Activated CD4-positive, alpha-beta memory T cell treated with anti-CD3 and anti-CD28 coated beads for 36 hours (primary cell): ENCODE measurements at regions of chr6 and their contacts with region 1.

Region 1: DNA sequence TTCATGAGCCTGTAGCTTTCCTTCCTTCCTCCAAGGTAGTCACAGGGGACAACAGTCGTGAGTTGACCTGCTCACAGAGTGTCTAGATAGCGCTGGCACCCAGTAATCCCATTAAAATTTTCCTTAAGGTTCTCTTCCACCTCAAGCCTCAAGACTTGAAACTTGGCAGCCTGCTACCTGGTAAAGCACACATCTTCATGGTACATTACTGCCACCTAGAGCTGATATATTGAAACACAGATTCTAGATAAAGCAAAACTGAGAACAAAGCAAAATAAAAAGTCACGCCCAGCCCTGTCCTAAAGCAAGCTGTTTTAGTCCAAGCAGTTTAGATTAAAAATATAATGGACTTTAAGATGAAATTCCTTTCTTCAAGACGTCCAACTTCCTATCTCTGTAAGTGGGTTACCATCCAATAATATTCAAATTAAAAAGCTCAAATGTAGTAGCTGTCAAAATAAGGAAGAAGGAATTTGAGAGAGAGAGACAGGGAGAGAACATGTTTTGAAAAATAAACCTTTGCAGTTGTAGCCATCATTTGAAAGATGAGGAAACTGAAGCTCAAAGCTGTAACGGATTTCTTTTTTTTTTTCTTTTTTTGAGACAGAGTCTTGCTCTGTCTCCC is 50.7 kb upstream of the CD83 start:
- DNase-seq: no peak
- H3K4me3 Mint-ChIP-seq: no peak overlapping the region
- H3K27ac Mint-ChIP-seq: no peak overlapping the region
- H3K4me1 Mint-ChIP-seq: peaks cover 13% of the 10 kb centered on the region
- H3K27me3 Mint-ChIP-seq: peaks cover 6% of the 10 kb centered on the region

Region 2: GRCh38 chr6:13795041-13795750 is 271.7 kb before region 1 on chr6:
- CTCF ChIA-PET with region 1: interaction called, 16 read pairs
- POLR2A ChIA-PET with region 1: no interaction called
- intact Hi-C with region 1: loop called (anchors 1 kb)
- DNase-seq: peak; percentile 93
- H3K4me3 Mint-ChIP-seq: no peak overlapping the region
- H3K27ac Mint-ChIP-seq: no peak overlapping the region
- H3K4me1 Mint-ChIP-seq: peaks cover 24% of the 10 kb centered on the region
- H3K27me3 Mint-ChIP-seq: no peaks in the 10 kb centered on the region

Region 3: DNA sequence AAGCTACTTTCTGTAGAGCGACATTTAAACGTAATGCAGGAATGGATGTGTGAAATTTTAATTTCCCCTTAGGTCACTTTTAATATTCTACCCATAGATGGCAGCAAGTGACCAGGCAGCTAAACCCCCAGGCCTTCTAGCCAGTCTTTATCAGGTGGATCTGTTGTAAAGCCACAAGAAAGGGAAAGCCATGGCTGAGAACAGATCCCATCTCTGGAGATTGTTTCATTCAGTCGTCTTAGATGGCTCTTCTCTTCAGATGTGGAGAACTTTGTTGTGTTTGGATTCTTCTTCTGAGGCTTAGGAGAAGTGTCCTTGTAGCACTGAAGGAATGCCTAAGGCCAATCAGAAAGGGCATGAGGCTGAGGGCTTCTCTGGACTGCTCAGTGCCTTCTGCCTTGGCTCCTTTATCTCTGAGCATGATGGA is 157.9 kb before region 1 on chr6:
- CTCF ChIA-PET with region 1: interaction called, 143 read pairs
- POLR2A ChIA-PET with region 1: no interaction called
- intact Hi-C with region 1: loop called (anchors 1 kb)
- DNase-seq: peak; percentile 49
- H3K4me3 Mint-ChIP-seq: no peak overlapping the region
- H3K27ac Mint-ChIP-seq: no peak overlapping the region
- H3K4me1 Mint-ChIP-seq: no peaks in the 10 kb centered on the region
- H3K27me3 Mint-ChIP-seq: peaks cover 28% of the 10 kb centered on the region

Region 4: GRCh38 chr6:14117158-14118090 is 50.5 kb after region 1 on chr6 and contains the start of gene CD83:
- CTCF ChIA-PET with region 1: interaction called, 10 read pairs
- POLR2A ChIA-PET with region 1: no interaction called
- intact Hi-C with region 1: no loop called
- DNase-seq: peak; percentile 81
- H3K4me3 Mint-ChIP-seq: peak within 1 kb of the TSS; percentile 86
- H3K27ac Mint-ChIP-seq: peak within 1 kb of the TSS; percentile 76
- H3K4me1 Mint-ChIP-seq: peaks cover 37% of the 10 kb centered on the region
- H3K27me3 Mint-ChIP-seq: no peaks in the 10 kb centered on the region
- total RNA-seq, gene CD83: 21.8 to 23.0 TPM

Region 5: DNA sequence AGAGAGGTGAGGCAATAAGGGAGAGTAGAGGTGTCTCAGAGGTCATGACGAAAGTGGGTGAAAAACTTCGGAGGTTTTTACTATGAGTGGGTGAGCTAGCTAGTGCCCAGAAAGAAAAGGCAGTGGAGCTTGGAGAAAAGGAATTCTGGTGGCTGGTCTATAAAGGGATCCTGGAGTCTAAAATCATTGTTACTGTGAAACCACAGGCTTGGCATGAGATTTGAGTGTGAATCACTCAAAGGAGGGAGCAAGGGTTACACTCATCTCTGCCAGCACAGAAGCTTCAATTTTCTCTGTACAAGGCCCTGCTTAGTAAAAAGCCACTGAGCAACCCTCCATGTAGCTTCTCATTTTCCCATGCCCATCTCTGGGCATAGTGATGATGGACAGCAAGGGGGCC is 98.2 kb after region 1 on chr6:
- CTCF ChIA-PET with region 1: no interaction called
- POLR2A ChIA-PET with region 1: no interaction called
- intact Hi-C with region 1: no loop called
- DNase-seq: no peak
- H3K4me3 Mint-ChIP-seq: no peak overlapping the region
- H3K27ac Mint-ChIP-seq: no peak overlapping the region
- H3K4me1 Mint-ChIP-seq: no peaks in the 10 kb centered on the region
- H3K27me3 Mint-ChIP-seq: no peaks in the 10 kb centered on the region